ENCODE measurements at regions of chr12 and their contacts with region 1.

Region 1: GRCh38 chr12:26028953-26029735 is 70.7 kb downstream of the RASSF8 start:
- DNase-seq: peak; percentile 78
- H3K4me3 ChIP-seq: no peak overlapping the region
- H3K27ac ChIP-seq: no peak overlapping the region
- H3K4me1 ChIP-seq: peaks cover 2% of the 10 kb centered on the region
- H3K27me3 ChIP-seq: no peaks in the 10 kb centered on the region
- CTCF ChIP-seq: peak; percentile 52 to 55
- POLR2A ChIP-seq: no peak

Region 2: GRCh38 chr12:25557830-25558436 is 471.2 kb before region 1 on chr12:
- CTCF ChIA-PET with region 1: no interaction called
- POLR2A ChIA-PET with region 1: no interaction called
- dilution Hi-C with region 1: no loop called
- intact Hi-C with region 1: loop called (anchors 2 kb)
- DNase-seq: peak; percentile 42
- H3K4me3 ChIP-seq: no peak overlapping the region
- H3K27ac ChIP-seq: no peak overlapping the region
- H3K4me1 ChIP-seq: no peaks in the 10 kb centered on the region
- H3K27me3 ChIP-seq: no peaks in the 10 kb centered on the region
- CTCF ChIP-seq: peak; percentile 26 to 36
- POLR2A ChIP-seq: no peak

Region 3: DNA sequence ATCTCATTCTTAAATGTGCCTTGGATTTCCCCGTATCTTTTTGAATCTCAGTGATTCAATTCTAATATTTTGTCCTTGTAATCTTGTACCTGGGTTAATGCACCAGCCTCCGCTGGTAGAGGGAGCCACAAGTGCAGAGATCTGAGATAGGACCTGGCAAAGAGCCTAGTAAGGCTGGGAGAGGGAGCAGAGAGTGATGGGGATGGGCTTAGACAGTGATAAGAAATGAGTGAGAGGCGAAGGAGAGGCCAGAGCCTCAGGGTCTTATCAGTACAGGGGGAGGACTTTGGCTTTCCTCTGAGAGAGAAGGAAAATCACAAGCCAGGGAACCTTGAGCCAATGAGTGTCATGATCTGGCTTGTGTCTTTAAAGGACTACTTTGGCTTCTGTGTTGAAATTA is 445.6 kb before region 1 on chr12:
- CTCF ChIA-PET with region 1: no interaction called
- POLR2A ChIA-PET with region 1: no interaction called
- dilution Hi-C with region 1: no loop called
- intact Hi-C with region 1: loop called (anchors 2 kb)
- DNase-seq: peak; percentile 28
- H3K4me3 ChIP-seq: no peak overlapping the region
- H3K27ac ChIP-seq: no peak overlapping the region
- H3K4me1 ChIP-seq: no peaks in the 10 kb centered on the region
- H3K27me3 ChIP-seq: no peaks in the 10 kb centered on the region
- CTCF ChIP-seq: no peak
- POLR2A ChIP-seq: no peak

Region 4: DNA sequence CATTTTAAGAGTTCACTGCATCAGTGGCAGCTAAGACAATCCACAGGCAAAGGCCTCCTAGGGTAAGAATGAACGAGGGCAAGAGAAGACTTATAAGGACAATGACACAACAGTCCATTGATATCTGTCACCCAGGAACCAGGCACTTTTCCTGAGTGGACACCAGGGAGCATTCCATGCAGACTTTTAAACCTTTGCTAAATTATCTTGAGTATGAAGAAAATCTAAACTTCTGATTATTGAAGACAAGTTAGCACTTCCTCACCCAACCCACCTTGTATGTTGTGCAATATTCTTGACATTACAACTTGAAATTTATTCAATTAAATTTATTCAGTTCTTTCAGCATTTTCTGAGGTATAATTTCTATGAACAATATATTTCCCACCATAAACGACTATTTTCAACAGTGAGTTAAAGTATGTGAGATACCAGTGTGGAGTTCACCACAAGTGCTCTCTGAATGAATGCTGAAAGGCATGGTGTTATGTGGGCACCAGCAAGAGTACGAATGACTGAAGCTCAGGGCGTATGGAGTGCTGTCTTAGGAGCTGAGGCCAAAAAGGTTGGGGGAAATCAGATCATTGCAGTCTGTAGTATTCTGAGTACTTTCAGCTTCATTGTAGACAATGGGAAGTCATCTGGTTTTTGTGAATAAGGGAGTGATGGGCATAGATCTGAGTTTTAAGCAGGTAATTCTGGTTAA is 351.8 kb before region 1 on chr12:
- CTCF ChIA-PET with region 1: no interaction called
- POLR2A ChIA-PET with region 1: no interaction called
- dilution Hi-C with region 1: no loop called
- intact Hi-C with region 1: loop called (anchors 1 kb)
- DNase-seq: no peak
- H3K4me3 ChIP-seq: no peak overlapping the region
- H3K27ac ChIP-seq: no peak overlapping the region
- H3K4me1 ChIP-seq: peaks cover 4% of the 10 kb centered on the region
- H3K27me3 ChIP-seq: no peaks in the 10 kb centered on the region
- CTCF ChIP-seq: peak in 1 of 2 donors; percentile 15
- POLR2A ChIP-seq: no peak

Region 5: GRCh38 chr12:25694072-25694471 is 335.1 kb before region 1 on chr12:
- CTCF ChIA-PET with region 1: no interaction called
- POLR2A ChIA-PET with region 1: no interaction called
- dilution Hi-C with region 1: no loop called
- intact Hi-C with region 1: loop called (anchors 5 kb)
- DNase-seq: peak; percentile 88
- H3K4me3 ChIP-seq: peak overlapping the region in 1 of 3 experiments; percentile 15
- H3K27ac ChIP-seq: peak overlapping the region; percentile 52
- H3K4me1 ChIP-seq: peaks cover 19% of the 10 kb centered on the region
- H3K27me3 ChIP-seq: no peaks in the 10 kb centered on the region
- CTCF ChIP-seq: no peak
- POLR2A ChIP-seq: no peak

Region 6: GRCh38 chr12:26177283-26177682 is 148.1 kb after region 1 on chr12:
- CTCF ChIA-PET with region 1: no interaction called
- POLR2A ChIA-PET with region 1: no interaction called
- dilution Hi-C with region 1: no loop called
- intact Hi-C with region 1: no loop called
- DNase-seq: no peak
- H3K4me3 ChIP-seq: no peak overlapping the region
- H3K27ac ChIP-seq: no peak overlapping the region
- H3K4me1 ChIP-seq: no peaks in the 10 kb centered on the region
- H3K27me3 ChIP-seq: peaks cover 18 to 25% of the 10 kb centered on the region in 2 experiments
- CTCF ChIP-seq: no peak
- POLR2A ChIP-seq: no peak

Region 7: GRCh38 chr12:26493656-26494055 is 464.5 kb after region 1 on chr12:
- CTCF ChIA-PET with region 1: no interaction called
- POLR2A ChIA-PET with region 1: no interaction called
- dilution Hi-C with region 1: no loop called
- intact Hi-C with region 1: no loop called
- DNase-seq: peak; percentile 11
- H3K4me3 ChIP-seq: no peak overlapping the region
- H3K27ac ChIP-seq: no peak overlapping the region
- H3K4me1 ChIP-seq: no peaks in the 10 kb centered on the region
- H3K27me3 ChIP-seq: no peaks in the 10 kb centered on the region
- CTCF ChIP-seq: no peak
- POLR2A ChIP-seq: no peak